PC-3 (cell line): ENCODE measurements at regions of chr10 and their contacts with region 1.

Region 1: DNA sequence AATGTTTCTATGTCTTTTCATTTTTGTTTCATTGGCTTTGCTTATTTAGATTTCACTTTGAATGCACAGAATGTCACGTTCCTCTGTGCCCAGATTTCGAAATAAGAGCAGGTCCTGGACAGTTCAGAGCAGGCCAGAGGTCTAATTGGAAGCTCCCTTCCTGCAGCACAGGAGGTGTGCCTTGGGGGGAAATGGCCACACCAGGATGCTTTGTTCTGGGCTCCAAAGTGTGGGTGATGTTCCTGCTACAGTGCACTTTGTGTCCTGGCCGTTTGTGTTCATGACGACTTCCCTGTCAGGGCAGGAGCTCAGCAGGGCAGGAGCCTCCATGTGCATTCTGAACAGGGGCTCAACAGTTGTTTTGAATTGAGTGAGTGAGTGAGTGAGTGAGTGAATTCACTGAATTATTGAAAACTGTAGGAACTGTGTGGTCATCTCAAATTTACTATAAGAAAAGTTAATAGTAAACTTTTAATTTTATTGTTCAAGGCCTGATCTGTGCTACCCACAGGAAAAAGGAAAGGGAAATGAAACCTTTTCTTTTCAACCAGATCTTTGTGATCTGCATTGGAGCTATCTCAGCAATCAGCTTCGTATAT is 109.5 kb upstream of the GJD4 start:
- DNase-seq: no peak
- ATAC-seq: no peak
- H3K4me3 ChIP-seq: no peak overlapping the region
- H3K27ac ChIP-seq: no peak overlapping the region
- H3K4me1 ChIP-seq: peaks cover 21% of the 10 kb centered on the region
- H3K27me3 ChIP-seq: no peaks in the 10 kb centered on the region
- CTCF ChIP-seq: no peak

Region 2: GRCh38 chr10:35300063-35300699 is 195.4 kb before region 1 on chr10:
- CTCF ChIA-PET with region 1: no interaction called
- POLR2A ChIA-PET with region 1: interaction called, 10 read pairs
- intact Hi-C with region 1: no loop called
- DNase-seq: peak; percentile 99
- ATAC-seq: peak; percentile 100
- H3K4me3 ChIP-seq: peak overlapping the region; percentile 29
- H3K27ac ChIP-seq: peak overlapping the region; percentile 6
- H3K4me1 ChIP-seq: peaks cover 13% of the 10 kb centered on the region
- H3K27me3 ChIP-seq: no peaks in the 10 kb centered on the region
- CTCF ChIP-seq: no peak

Region 3: GRCh38 chr10:35329520-35329919 is 166.1 kb before region 1 on chr10:
- CTCF ChIA-PET with region 1: no interaction called
- POLR2A ChIA-PET with region 1: interaction called, 18 read pairs
- intact Hi-C with region 1: loop called (anchors 1 kb)
- DNase-seq: no peak
- ATAC-seq: no peak
- H3K4me3 ChIP-seq: no peak overlapping the region
- H3K27ac ChIP-seq: no peak overlapping the region
- H3K4me1 ChIP-seq: peaks cover 39% of the 10 kb centered on the region
- H3K27me3 ChIP-seq: no peaks in the 10 kb centered on the region
- CTCF ChIP-seq: no peak

Region 4: GRCh38 chr10:35372329-35372728 is 123.3 kb before region 1 on chr10:
- CTCF ChIA-PET with region 1: no interaction called
- POLR2A ChIA-PET with region 1: no interaction called
- intact Hi-C with region 1: loop called (anchors 1 kb)
- DNase-seq: peak; percentile 100
- ATAC-seq: peak; percentile 99
- H3K4me3 ChIP-seq: peak overlapping the region; percentile 8; the same call in 1 of the 2 replicates
- H3K27ac ChIP-seq: peak overlapping the region; percentile 76
- H3K4me1 ChIP-seq: peaks cover 31% of the 10 kb centered on the region
- H3K27me3 ChIP-seq: no peaks in the 10 kb centered on the region
- CTCF ChIP-seq: no peak

Region 5: GRCh38 chr10:35433851-35434426 is 61.7 kb before region 1 on chr10:
- CTCF ChIA-PET with region 1: no interaction called
- POLR2A ChIA-PET with region 1: no interaction called
- intact Hi-C with region 1: no loop called
- DNase-seq: no peak
- ATAC-seq: no peak
- H3K4me3 ChIP-seq: no peak overlapping the region
- H3K27ac ChIP-seq: no peak overlapping the region
- H3K4me1 ChIP-seq: no peaks in the 10 kb centered on the region
- H3K27me3 ChIP-seq: no peaks in the 10 kb centered on the region
- CTCF ChIP-seq: no peak

Region 6: GRCh38 chr10:35447693-35448407 is 47.8 kb before region 1 on chr10:
- CTCF ChIA-PET with region 1: no interaction called
- POLR2A ChIA-PET with region 1: no interaction called
- intact Hi-C with region 1: loop called (anchors 1 kb)
- DNase-seq: peak; percentile 91
- ATAC-seq: peak; percentile 77
- H3K4me3 ChIP-seq: peak overlapping the region; percentile 13
- H3K27ac ChIP-seq: peak overlapping the region; percentile 23
- H3K4me1 ChIP-seq: peaks cover 24% of the 10 kb centered on the region
- H3K27me3 ChIP-seq: no peaks in the 10 kb centered on the region
- CTCF ChIP-seq: no peak

Region 7: DNA sequence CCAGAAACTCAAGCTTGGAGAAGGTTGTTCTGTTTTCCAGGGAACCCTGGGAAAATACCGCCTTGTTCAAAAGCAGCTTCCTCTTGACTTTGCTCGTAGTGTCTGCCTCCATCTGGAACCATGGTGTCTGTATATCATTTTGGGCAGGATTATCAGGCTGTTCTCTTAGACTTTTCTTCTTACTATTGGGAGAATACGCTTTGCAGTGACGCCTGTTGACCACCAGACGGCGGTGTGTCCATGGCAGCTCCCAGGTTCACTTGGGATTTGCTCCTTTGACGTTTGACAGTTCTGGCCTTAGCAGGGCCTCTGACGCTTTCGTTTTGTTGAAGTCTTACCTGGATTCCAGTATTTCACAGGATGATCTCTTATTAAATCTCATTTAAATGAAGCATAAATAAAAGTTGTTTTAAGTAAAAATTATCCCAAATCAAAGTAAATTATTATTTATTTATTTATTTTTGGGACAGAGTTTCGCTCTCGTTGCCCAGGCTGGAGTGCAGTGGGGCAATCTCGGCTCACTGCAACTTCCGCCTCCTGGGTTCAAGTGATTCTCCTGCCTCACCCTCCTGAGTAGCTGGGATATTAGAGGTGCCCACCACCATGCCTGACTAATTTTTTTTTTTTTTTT is 67.8 kb after region 1 on chr10:
- CTCF ChIA-PET with region 1: interaction called, 10 read pairs
- POLR2A ChIA-PET with region 1: no interaction called
- intact Hi-C with region 1: no loop called
- DNase-seq: peak; percentile 98
- ATAC-seq: peak; percentile 85
- H3K4me3 ChIP-seq: no peak overlapping the region
- H3K27ac ChIP-seq: no peak overlapping the region
- H3K4me1 ChIP-seq: 0 out of 2 replicates have a peak, but pooled peaks cover 2% of the 10 kb centered on the region
- H3K27me3 ChIP-seq: no peaks in the 10 kb centered on the region
- CTCF ChIP-seq: peak; percentile 100

Region 8: GRCh38 chr10:35661236-35661635 is 165.6 kb after region 1 on chr10:
- CTCF ChIA-PET with region 1: no interaction called
- POLR2A ChIA-PET with region 1: no interaction called
- intact Hi-C with region 1: no loop called
- DNase-seq: peak; percentile 44
- ATAC-seq: peak; percentile 61
- H3K4me3 ChIP-seq: no peak overlapping the region
- H3K27ac ChIP-seq: no peak overlapping the region
- H3K4me1 ChIP-seq: peaks cover 11% of the 10 kb centered on the region
- H3K27me3 ChIP-seq: no peaks in the 10 kb centered on the region
- CTCF ChIP-seq: no peak